AG04450 (cell line): ENCODE measurements at regions of chr11 and their contacts with region 1.

Region 1: GRCh38 chr11:58502004-58502403 is 5.9 kb downstream of the OR5B21 start:
- DNase-seq: no peak
- H3K4me3 ChIP-seq: no peak overlapping the region
- H3K27ac ChIP-seq: no peak overlapping the region
- H3K27me3 ChIP-seq: no peaks in the 10 kb centered on the region
- CTCF ChIP-seq: no peak

Region 2: DNA sequence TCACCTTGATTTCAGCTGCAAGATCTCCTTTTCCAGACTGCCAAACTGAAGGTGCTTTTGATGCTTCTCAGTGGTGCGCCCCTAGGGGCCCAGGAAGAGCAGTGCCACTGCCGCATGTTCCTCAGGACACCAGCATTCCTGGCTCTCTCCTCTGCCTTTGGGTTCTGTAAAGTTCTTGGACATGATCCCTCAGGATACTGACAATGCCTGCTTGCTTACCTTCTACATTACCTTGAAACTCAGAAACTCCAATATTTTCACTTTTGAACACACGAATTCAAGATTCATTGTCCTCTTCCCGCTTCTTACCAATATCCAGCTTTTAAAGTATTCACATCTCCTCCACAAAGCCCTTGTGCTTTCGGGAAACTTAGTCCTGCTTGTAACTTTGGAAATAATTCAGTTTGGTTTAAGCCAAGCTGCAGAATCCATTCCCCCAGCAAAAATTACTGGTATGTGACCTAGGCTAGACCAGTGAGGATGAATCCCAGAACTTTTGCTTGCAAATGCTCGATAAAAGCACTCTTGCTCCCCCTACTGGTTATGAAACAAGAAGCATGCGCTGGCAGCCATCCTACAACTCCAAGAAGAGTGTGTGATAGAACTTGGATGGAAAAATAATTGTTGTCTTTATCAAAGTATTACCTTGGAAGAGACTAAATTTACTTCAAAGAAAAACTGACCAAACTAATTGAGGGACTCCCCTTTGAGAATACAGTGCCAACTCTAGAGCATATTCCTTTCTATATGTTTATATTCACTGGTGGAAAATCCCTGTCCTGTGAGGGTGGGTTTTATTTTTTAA is 22.4 kb after region 1 on chr11:
- CTCF ChIA-PET with region 1: interaction called, 13 read pairs
- POLR2A ChIA-PET with region 1: no interaction called
- DNase-seq: peak; percentile 80
- H3K4me3 ChIP-seq: no peak overlapping the region
- H3K27ac ChIP-seq: no peak overlapping the region
- H3K27me3 ChIP-seq: no peaks in the 10 kb centered on the region
- CTCF ChIP-seq: peak; percentile 89